Natural killer cell (primary cell): ENCODE measurements at regions of chr10 and their contacts with region 1.

Region 1: DNA sequence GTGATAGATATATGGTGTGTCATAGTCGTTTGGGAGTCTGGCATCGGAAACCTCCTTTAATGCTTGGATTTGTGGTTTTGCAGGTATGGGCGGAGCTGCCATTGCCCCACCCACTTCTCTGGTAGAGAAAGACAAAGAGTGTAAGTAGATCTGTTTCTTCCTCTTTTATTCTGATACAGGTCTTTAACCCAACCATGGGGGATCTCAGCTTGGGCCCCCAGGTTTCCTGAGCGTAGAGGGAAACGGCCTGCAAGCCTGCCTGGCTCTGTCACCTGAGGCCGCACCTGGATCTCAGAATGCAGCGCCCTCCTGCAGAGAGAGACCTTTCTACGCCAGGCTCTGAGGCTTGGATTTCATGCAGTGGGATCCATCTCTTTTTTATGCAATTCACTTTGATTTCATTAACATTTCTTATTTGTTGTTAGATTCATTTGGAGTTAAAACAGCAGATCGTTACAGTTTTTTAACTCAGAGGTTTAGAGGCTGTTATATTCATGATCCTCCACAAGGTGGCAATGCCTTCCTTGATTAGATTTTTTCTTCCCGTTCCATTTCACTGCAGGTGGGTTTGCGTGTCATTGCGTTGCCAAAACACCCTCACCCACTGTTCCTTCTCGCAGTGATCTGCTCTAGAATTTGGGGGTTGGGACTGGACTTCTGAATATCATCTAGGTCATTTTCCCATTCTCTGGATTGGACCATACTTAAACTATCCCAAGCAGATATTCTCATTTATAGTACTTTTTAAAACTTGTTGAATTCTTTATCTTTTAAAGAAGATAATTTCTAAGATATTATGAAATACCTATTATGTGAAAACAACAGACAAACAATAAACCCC is 20.0 kb downstream of the RBM17 start:
- DNase-seq: peak in 1 of 2 donors; percentile 82
- ATAC-seq: peak; percentile 62 to 90 (median 76)
- H3K4me3 ChIP-seq: no peak overlapping the region
- H3K4me3 Mint-ChIP-seq: no peak overlapping the region
- H3K27ac ChIP-seq: no peak overlapping the region
- H3K27ac Mint-ChIP-seq: peak overlapping the region; percentile 36 to 60
- H3K4me1 ChIP-seq: peaks cover 6% of the 10 kb centered on the region
- H3K4me1 Mint-ChIP-seq: peaks cover 16 to 27% of the 10 kb centered on the region in 2 donors
- H3K27me3 ChIP-seq: no peaks in the 10 kb centered on the region
- H3K27me3 Mint-ChIP-seq: no peaks in the 10 kb centered on the region
- CTCF ChIP-seq: peak; percentile 87

Region 2: DNA sequence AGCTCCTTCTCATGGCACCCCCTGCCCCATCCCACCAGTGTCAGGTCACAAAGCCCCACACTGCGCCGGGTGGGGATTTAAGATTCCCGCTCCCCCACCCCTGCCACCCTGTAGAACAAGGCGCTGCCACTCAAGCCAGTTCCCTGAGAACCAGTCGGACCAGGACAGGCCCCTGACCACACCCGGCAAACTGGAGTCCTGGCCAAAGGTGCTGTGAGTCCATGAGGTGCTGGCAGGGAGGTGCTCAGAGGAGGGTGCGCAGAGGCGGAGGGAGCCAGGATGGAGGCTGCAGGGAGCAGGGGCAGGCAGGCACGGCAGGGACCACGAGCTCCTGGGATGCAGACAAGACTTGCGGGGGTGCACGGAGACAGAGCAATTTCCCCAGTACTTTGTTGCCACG is 275.9 kb before region 1 on chr10:
- intact Hi-C with region 1: no loop called
- DNase-seq: no peak
- ATAC-seq: no peak
- H3K4me3 ChIP-seq: no peak overlapping the region
- H3K4me3 Mint-ChIP-seq: no peak overlapping the region
- H3K27ac ChIP-seq: no peak overlapping the region
- H3K27ac Mint-ChIP-seq: no peak overlapping the region
- H3K4me1 ChIP-seq: no peaks in the 10 kb centered on the region
- H3K4me1 Mint-ChIP-seq: no peaks in the 10 kb centered on the region
- H3K27me3 ChIP-seq: no peaks in the 10 kb centered on the region
- H3K27me3 Mint-ChIP-seq: no peaks in the 10 kb centered on the region
- CTCF ChIP-seq: no peak

Region 3: GRCh38 chr10:6151087-6151977 is 42.5 kb after region 1 on chr10:
- intact Hi-C with region 1: loop called (anchors 1 kb)
- DNase-seq: peak; percentile 49 to 80
- ATAC-seq: peak; percentile 81 to 89 (median 87)
- H3K4me3 ChIP-seq: peak overlapping the region; percentile 16
- H3K4me3 Mint-ChIP-seq: peak overlapping the region; percentile 84
- H3K27ac ChIP-seq: peak overlapping the region; percentile 66
- H3K27ac Mint-ChIP-seq: peak overlapping the region; percentile 75 to 85
- H3K4me1 ChIP-seq: peaks cover 29% of the 10 kb centered on the region
- H3K4me1 Mint-ChIP-seq: peaks cover 27 to 37% of the 10 kb centered on the region in 2 donors
- H3K27me3 ChIP-seq: no peaks in the 10 kb centered on the region
- H3K27me3 Mint-ChIP-seq: no peaks in the 10 kb centered on the region
- CTCF ChIP-seq: peak; percentile 72

Region 4: GRCh38 chr10:6401562-6402348 is 292.9 kb after region 1 on chr10:
- intact Hi-C with region 1: loop called (anchors 1 kb)
- DNase-seq: peak; percentile 36 to 86
- ATAC-seq: peak; percentile 84 to 97 (median 95)
- H3K4me3 ChIP-seq: no peak overlapping the region
- H3K4me3 Mint-ChIP-seq: peak overlapping the region; percentile 7
- H3K27ac ChIP-seq: no peak overlapping the region
- H3K27ac Mint-ChIP-seq: peak overlapping the region in 1 of 2 donors; percentile 51
- H3K4me1 ChIP-seq: peaks cover 9% of the 10 kb centered on the region
- H3K4me1 Mint-ChIP-seq: peaks cover 7 to 8% of the 10 kb centered on the region in 2 donors
- H3K27me3 ChIP-seq: no peaks in the 10 kb centered on the region
- H3K27me3 Mint-ChIP-seq: peaks cover 6 to 13% of the 10 kb centered on the region in 2 donors
- CTCF ChIP-seq: peak; percentile 63